Caco-2 (cell line): ENCODE measurements at regions of chr14 and their contacts with region 1.

Region 1: DNA sequence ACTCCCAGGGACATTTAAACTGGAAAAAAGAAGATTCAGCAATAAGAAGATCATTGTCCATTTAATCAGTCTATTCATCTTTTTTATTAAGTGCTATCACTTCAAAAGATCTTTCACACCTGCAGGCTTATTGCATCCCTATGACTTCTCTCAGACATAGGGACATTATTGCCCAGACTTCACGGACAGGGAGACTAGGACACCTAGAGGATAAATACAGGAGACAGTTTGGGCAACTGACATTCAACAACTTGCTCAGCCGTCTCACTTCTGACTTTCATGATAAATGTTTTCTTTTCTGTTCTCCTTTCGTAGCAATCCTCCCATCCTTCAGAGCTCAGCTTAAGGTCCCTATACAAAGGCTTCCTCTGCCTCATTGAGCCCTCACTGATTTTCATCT is 84.3 kb downstream of the TMEM30B start:
- DNase-seq: no peak
- H3K4me3 ChIP-seq: no peak overlapping the region
- H3K4me3 Mint-ChIP-seq: no peak overlapping the region
- H3K27ac Mint-ChIP-seq: no peak overlapping the region
- H3K4me1 ChIP-seq: no peaks in the 10 kb centered on the region
- H3K4me1 Mint-ChIP-seq: no peaks in the 10 kb centered on the region
- H3K27me3 ChIP-seq: no peaks in the 10 kb centered on the region
- H3K27me3 Mint-ChIP-seq: peaks cover 12% of the 10 kb centered on the region
- CTCF ChIP-seq: peak in 1 of 2 experiments; percentile 19

Region 2: DNA sequence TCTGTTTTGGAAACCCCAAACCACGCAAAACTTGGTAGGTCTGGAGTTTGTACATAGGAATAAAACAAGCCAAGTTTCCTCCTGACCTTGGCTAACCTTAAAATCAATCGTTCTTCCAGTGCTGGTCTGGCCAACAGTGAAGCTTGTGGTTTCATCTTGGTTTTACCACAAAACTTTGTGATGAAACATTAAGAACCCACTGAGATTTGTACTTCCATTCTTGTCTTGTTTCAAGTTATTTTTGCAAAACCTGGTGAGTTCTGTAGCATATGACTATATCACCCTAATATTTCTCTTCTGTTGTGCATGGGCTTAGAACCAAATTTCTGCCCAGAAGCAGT is 573.9 kb before region 1 on chr14:
- CTCF ChIA-PET with region 1: no interaction called
- POLR2A ChIA-PET with region 1: no interaction called
- intact Hi-C with region 1: loop called (anchors 2 kb)
- DNase-seq: no peak
- H3K4me3 ChIP-seq: no peak overlapping the region
- H3K4me3 Mint-ChIP-seq: no peak overlapping the region
- H3K27ac Mint-ChIP-seq: no peak overlapping the region
- H3K4me1 ChIP-seq: peaks cover 6% of the 10 kb centered on the region
- H3K4me1 Mint-ChIP-seq: peaks cover 1% of the 10 kb centered on the region
- H3K27me3 ChIP-seq: no peaks in the 10 kb centered on the region
- H3K27me3 Mint-ChIP-seq: no peaks in the 10 kb centered on the region
- CTCF ChIP-seq: no peak